CD8-positive, alpha-beta T cell (primary cell): ENCODE measurements at regions of chr1 and their contacts with region 1.

Region 1: GRCh38 chr1:116485071-116485735 is 85.6 kb downstream of the CD58 start:
- DNase-seq: peak; percentile 77 to 93 (median 87)
- ATAC-seq: peak; percentile 95
- H3K4me3 ChIP-seq: no peak overlapping the region
- H3K4me3 Mint-ChIP-seq: no peak overlapping the region
- H3K27ac ChIP-seq: no peak overlapping the region
- H3K27ac Mint-ChIP-seq: no peak overlapping the region
- H3K4me1 ChIP-seq: no peaks in the 10 kb centered on the region
- H3K4me1 Mint-ChIP-seq: no peaks in the 10 kb centered on the region
- H3K27me3 ChIP-seq: no peaks in the 10 kb centered on the region
- H3K27me3 Mint-ChIP-seq: no peaks in the 10 kb centered on the region
- CTCF ChIP-seq: peak; percentile 87

Region 2: GRCh38 chr1:115706587-115707425 is 778.4 kb before region 1 on chr1:
- CTCF ChIA-PET with region 1: no interaction called
- POLR2A ChIA-PET with region 1: no interaction called
- intact Hi-C with region 1: loop called in 1 of 2 experiments (anchors 5 kb)
- DNase-seq: peak in 2 of 9 experiments; percentile 33 to 46
- ATAC-seq: no peak
- H3K4me3 ChIP-seq: no peak overlapping the region
- H3K4me3 Mint-ChIP-seq: no peak overlapping the region
- H3K27ac ChIP-seq: no peak overlapping the region
- H3K27ac Mint-ChIP-seq: no peak overlapping the region
- H3K4me1 ChIP-seq: no peaks in the 10 kb centered on the region
- H3K4me1 Mint-ChIP-seq: no peaks in the 10 kb centered on the region
- H3K27me3 ChIP-seq: peaks cover 0 to 2% of the 10 kb centered on the region in 2 experiments
- H3K27me3 Mint-ChIP-seq: peaks cover 14% of the 10 kb centered on the region
- CTCF ChIP-seq: peak; percentile 71

Region 3: DNA sequence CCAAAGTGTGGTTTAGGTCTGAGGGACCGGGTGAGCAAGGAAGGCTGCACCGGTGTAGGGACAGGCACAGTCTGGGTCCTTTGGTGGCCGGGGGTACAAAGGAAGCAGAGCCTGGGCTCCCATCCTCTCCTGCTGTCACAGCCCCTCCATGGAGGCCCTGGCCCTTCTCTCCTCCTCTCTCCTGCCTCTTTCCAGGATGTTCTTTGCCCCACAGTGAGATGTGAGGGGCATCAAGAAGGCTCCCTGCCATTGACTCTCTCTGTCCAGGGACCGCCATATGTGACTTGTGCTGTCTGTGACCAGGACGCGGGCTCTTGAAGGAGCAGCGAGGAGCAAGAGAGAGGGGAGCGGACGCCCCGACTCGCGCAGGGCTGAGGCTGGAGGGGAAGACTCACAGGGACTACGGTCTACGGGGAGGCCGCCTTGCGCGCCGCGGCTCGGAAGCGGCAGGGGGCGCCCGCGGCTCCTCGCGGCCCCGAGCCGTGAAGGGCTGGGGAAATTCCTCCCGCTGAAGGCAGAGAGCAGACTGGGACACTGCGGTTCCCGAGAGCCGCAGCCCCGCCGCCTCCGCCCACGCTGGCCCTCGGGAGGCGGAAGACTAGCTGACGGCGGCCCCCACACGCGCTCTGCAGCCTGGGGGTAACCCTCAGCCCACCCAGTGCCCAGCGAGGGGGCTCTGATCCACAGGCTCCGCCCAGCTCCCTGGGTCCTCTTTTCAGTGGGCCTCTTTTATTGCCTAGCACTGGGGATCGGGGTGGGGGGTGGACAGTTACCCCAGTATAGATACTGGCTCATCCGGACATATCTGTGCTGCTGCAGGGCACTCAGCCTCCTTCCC is 333.2 kb before region 1 on chr1:
- CTCF ChIA-PET with region 1: interaction called, 618 read pairs
- POLR2A ChIA-PET with region 1: interaction called, 11 read pairs
- intact Hi-C with region 1: no loop called
- DNase-seq: peak; percentile 58 to 93 (median 76)
- ATAC-seq: peak; percentile 91
- H3K4me3 ChIP-seq: peak overlapping the region; percentile 35 to 52
- H3K4me3 Mint-ChIP-seq: peak overlapping the region; percentile 79
- H3K27ac ChIP-seq: peak overlapping the region; percentile 17 to 46
- H3K27ac Mint-ChIP-seq: peak overlapping the region; percentile 92
- H3K4me1 ChIP-seq: peaks cover 26% of the 10 kb centered on the region
- H3K4me1 Mint-ChIP-seq: peaks cover 30% of the 10 kb centered on the region
- H3K27me3 ChIP-seq: no peaks in the 10 kb centered on the region
- H3K27me3 Mint-ChIP-seq: no peaks in the 10 kb centered on the region
- CTCF ChIP-seq: peak; percentile 93

Region 4: GRCh38 chr1:116232989-116233514 is 252.2 kb before region 1 on chr1:
- CTCF ChIA-PET with region 1: interaction called, 136 read pairs
- POLR2A ChIA-PET with region 1: no interaction called
- intact Hi-C with region 1: loop called (anchors 1 kb)
- DNase-seq: peak in 4 of 9 experiments; percentile 30 to 64 (median 51)
- ATAC-seq: peak; percentile 73
- H3K4me3 ChIP-seq: no peak overlapping the region
- H3K4me3 Mint-ChIP-seq: no peak overlapping the region
- H3K27ac ChIP-seq: no peak overlapping the region
- H3K27ac Mint-ChIP-seq: no peak overlapping the region
- H3K4me1 ChIP-seq: peaks cover 6% of the 10 kb centered on the region
- H3K4me1 Mint-ChIP-seq: peaks cover 11% of the 10 kb centered on the region
- H3K27me3 ChIP-seq: no peaks in the 10 kb centered on the region
- H3K27me3 Mint-ChIP-seq: no peaks in the 10 kb centered on the region
- CTCF ChIP-seq: peak; percentile 45

Region 5: DNA sequence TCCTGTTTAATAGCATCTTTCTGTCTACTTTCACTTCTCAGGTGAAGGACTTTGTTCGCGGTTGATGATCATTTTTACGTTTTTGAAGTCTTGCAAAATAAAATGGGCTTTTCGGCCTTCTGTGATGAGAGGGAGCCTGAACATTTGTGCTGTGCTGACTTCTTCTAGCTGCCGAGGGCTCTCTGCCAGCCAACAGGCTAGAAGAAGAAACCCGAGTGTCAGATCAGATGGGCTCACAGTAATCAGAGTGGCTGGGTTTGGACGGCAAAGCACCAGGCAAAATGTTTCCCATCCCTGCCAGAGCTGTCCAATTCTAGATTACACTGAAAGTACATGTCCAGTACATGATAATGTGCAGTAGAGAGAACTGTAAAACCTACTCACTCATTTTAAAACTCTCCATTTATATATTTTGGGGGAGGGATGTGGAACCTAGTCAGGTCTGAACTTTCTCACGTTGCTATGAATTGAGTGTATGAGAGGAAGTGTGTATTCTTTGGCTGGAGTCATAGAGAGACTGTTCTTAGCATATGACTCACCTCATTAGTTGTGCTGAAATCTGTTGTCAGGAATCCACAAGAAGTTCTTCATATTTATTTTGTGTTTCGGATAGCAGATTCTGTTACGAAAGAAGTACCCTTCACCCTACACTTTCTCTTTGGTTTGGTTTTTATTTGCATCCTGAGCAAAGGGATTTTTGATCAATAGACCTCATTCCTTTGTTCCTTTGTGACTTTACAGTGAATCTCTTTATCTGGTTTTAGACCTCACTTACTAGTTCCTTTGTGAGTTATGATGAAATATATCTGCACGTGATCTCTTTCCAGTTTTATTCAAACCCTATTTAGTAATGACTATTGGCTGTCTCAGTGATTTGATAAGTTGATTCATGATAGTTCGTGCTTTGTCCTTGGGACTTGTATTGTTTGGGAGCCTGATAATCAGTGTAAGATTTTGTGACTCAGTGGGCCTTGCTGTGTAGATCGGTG is 107.4 kb before region 1 on chr1:
- CTCF ChIA-PET with region 1: interaction called, 20 read pairs
- POLR2A ChIA-PET with region 1: interaction called, 3 read pairs
- intact Hi-C with region 1: no loop called
- DNase-seq: peak in 6 of 9 experiments; percentile 6 to 81 (median 52)
- ATAC-seq: peak; percentile 58
- H3K4me3 ChIP-seq: peak overlapping the region; percentile 24 to 39
- H3K4me3 Mint-ChIP-seq: peak overlapping the region; percentile 85
- H3K27ac ChIP-seq: peak overlapping the region; percentile 83 to 92
- H3K27ac Mint-ChIP-seq: peak overlapping the region; percentile 95
- H3K4me1 ChIP-seq: peaks cover 69% of the 10 kb centered on the region
- H3K4me1 Mint-ChIP-seq: peaks cover 85% of the 10 kb centered on the region
- H3K27me3 ChIP-seq: no peaks in the 10 kb centered on the region
- H3K27me3 Mint-ChIP-seq: no peaks in the 10 kb centered on the region
- CTCF ChIP-seq: no peak

Region 6: GRCh38 chr1:116472431-116472961 is 12.7 kb before region 1 on chr1:
- CTCF ChIA-PET with region 1: interaction called, 54 read pairs
- POLR2A ChIA-PET with region 1: no interaction called
- intact Hi-C with region 1: no loop called
- DNase-seq: no peak
- ATAC-seq: no peak
- H3K4me3 ChIP-seq: no peak overlapping the region
- H3K4me3 Mint-ChIP-seq: no peak overlapping the region
- H3K27ac ChIP-seq: no peak overlapping the region
- H3K27ac Mint-ChIP-seq: no peak overlapping the region
- H3K4me1 ChIP-seq: no peaks in the 10 kb centered on the region
- H3K4me1 Mint-ChIP-seq: no peaks in the 10 kb centered on the region
- H3K27me3 ChIP-seq: no peaks in the 10 kb centered on the region
- H3K27me3 Mint-ChIP-seq: no peaks in the 10 kb centered on the region
- CTCF ChIP-seq: no peak